B cell (primary cell): ENCODE measurements at regions of chr2 and their contacts with region 1.

Region 1: DNA sequence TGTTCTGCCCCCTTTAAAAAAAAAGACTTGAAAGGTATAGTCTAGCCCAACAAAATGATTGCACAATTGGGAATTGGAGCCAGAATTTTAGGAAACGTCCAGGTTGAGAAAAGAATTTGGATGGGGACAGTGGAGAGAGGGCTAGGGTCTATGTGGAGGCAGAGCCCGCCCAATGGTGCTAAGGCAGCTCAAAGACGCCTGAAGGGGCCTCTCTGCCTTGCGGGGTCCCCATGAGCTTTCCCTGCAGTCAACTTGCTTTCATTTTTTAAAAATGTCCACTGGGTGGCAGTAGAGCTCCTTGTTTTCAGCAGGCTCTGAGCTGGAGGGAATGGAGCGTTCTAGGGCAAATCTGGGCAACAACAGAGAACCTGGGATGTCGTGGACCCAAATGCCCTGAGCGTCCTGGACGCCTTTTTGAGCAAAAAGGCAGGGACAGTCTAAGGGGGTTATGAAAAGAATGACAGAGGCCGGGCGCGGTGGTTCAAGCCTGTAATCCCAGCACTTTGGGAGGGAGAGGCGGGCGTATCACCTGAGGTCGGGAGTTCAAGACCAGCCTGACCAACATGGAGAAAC is 40.2 kb upstream of the ITM2C start:
- DNase-seq: peak; percentile 86
- ATAC-seq: peak; percentile 75
- H3K4me3 ChIP-seq: no peak overlapping the region
- H3K4me3 Mint-ChIP-seq: peak overlapping the region; percentile 37
- H3K27ac ChIP-seq: no peak overlapping the region
- H3K27ac Mint-ChIP-seq: no peak overlapping the region
- H3K4me1 ChIP-seq: peaks cover 14 to 16% of the 10 kb centered on the region in 2 donors
- H3K4me1 Mint-ChIP-seq: peaks cover 5% of the 10 kb centered on the region
- H3K27me3 ChIP-seq: peaks cover 0 to 33% (median 20%) of the 10 kb centered on the region in 4 experiments
- H3K27me3 Mint-ChIP-seq: peaks cover 29% of the 10 kb centered on the region
- CTCF ChIP-seq: peak; percentile 83

Region 2: GRCh38 chr2:230840301-230840700 is 15.8 kb after region 1 on chr2:
- CTCF ChIA-PET with region 1: interaction called, 16 read pairs
- POLR2A ChIA-PET with region 1: no interaction called
- intact Hi-C with region 1: no loop called
- DNase-seq: no peak
- ATAC-seq: no peak
- H3K4me3 ChIP-seq: no peak overlapping the region
- H3K4me3 Mint-ChIP-seq: no peak overlapping the region
- H3K27ac ChIP-seq: no peak overlapping the region
- H3K27ac Mint-ChIP-seq: no peak overlapping the region
- H3K4me1 ChIP-seq: no peaks in the 10 kb centered on the region
- H3K4me1 Mint-ChIP-seq: no peaks in the 10 kb centered on the region
- H3K27me3 ChIP-seq: peaks cover 0 to 2% (median 0%) of the 10 kb centered on the region in 4 experiments
- H3K27me3 Mint-ChIP-seq: peaks cover 21% of the 10 kb centered on the region
- CTCF ChIP-seq: no peak

Region 3: GRCh38 chr2:230847883-230848388 is 23.4 kb after region 1 on chr2:
- CTCF ChIA-PET with region 1: interaction called, 30 read pairs
- POLR2A ChIA-PET with region 1: no interaction called
- intact Hi-C with region 1: loop called (anchors 1 kb)
- DNase-seq: peak; percentile 88
- ATAC-seq: peak; percentile 91
- H3K4me3 ChIP-seq: peak overlapping the region in 1 of 5 experiments; percentile 8
- H3K4me3 Mint-ChIP-seq: no peak overlapping the region
- H3K27ac ChIP-seq: no peak overlapping the region
- H3K27ac Mint-ChIP-seq: no peak overlapping the region
- H3K4me1 ChIP-seq: peaks cover 5 to 7% of the 10 kb centered on the region in 2 donors
- H3K4me1 Mint-ChIP-seq: peaks cover 6% of the 10 kb centered on the region
- H3K27me3 ChIP-seq: peaks cover 0 to 2% (median 0%) of the 10 kb centered on the region in 4 experiments
- H3K27me3 Mint-ChIP-seq: peaks cover 37% of the 10 kb centered on the region
- CTCF ChIP-seq: peak; percentile 95

Region 4: GRCh38 chr2:230913406-230914143 is 89.1 kb after region 1 on chr2:
- CTCF ChIA-PET with region 1: interaction called, 40 read pairs
- POLR2A ChIA-PET with region 1: no interaction called
- intact Hi-C with region 1: loop called (anchors 1 kb)
- DNase-seq: peak; percentile 82
- ATAC-seq: peak; percentile 87
- H3K4me3 ChIP-seq: no peak overlapping the region
- H3K4me3 Mint-ChIP-seq: no peak overlapping the region
- H3K27ac ChIP-seq: no peak overlapping the region
- H3K27ac Mint-ChIP-seq: no peak overlapping the region
- H3K4me1 ChIP-seq: peaks cover 0 to 10% of the 10 kb centered on the region in 2 donors
- H3K4me1 Mint-ChIP-seq: peaks cover 16% of the 10 kb centered on the region
- H3K27me3 ChIP-seq: no peaks in the 10 kb centered on the region
- H3K27me3 Mint-ChIP-seq: no peaks in the 10 kb centered on the region
- CTCF ChIP-seq: peak; percentile 80

Region 5: GRCh38 chr2:230981704-230982103 is 157.2 kb after region 1 on chr2:
- CTCF ChIA-PET with region 1: interaction called, 200 read pairs
- POLR2A ChIA-PET with region 1: no interaction called
- intact Hi-C with region 1: no loop called
- DNase-seq: no peak
- ATAC-seq: no peak
- H3K4me3 ChIP-seq: no peak overlapping the region
- H3K4me3 Mint-ChIP-seq: no peak overlapping the region
- H3K27ac ChIP-seq: no peak overlapping the region
- H3K27ac Mint-ChIP-seq: peak overlapping the region; percentile 50
- H3K4me1 ChIP-seq: peaks cover 1 to 2% of the 10 kb centered on the region in 2 donors
- H3K4me1 Mint-ChIP-seq: peaks cover 8% of the 10 kb centered on the region
- H3K27me3 ChIP-seq: peaks cover 0 to 3% (median 0%) of the 10 kb centered on the region in 4 experiments
- H3K27me3 Mint-ChIP-seq: peaks cover 13% of the 10 kb centered on the region
- CTCF ChIP-seq: no peak

Region 6: DNA sequence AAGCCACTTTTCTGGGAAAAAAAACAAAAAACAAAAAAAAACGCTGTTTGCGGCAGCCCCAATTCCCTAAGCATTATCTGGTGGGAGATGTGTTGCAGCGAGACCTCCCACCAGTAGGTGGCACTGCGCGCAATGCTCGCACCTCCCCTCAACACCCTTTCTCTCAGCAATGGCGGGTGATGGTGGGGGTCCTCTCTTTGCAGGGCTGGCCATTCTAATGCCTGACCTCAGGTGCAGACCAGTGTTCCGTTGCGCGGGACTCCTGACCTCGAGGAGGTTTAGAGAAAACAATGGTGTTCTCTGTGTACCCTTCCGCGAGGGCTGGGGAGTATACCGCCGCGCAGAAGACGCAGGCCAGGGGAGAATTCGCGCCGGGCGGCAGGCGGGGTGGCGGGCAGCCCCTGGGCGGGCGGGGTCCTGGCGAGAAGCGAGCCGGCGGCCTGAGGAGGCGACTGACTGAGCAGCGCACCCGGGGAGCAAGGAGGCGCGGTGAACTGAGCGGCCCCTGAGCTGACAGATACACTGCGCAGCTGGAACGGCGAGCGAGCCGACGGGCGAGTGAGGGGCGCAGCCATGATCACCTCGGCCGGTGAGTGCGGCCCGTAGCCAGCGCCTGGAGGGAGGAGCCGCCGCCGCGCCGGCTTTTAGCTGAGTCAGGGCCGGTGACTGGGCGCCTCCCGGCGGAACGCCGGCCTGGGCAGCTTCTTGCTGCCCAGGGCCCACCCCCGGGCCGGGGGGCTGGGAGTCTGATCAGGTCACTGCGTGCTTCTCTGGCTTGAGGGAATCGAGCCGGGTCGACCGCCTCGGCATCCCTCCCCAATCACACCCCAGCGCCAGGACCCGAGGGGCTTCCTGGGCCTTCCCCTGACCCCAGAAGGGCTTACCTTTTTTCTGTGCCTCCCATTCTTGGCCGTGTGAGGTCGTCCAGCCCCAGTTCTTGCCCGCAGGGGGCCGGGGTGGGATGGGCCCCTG is 232.2 kb after region 1 on chr2 and contains the start of gene PSMD1:
- CTCF ChIA-PET with region 1: interaction called, 17 read pairs
- POLR2A ChIA-PET with region 1: interaction called, 4 read pairs
- intact Hi-C with region 1: loop called (anchors 1 kb)
- DNase-seq: peak; percentile 98
- ATAC-seq: peak; percentile 87
- H3K4me3 ChIP-seq: peak within 1 kb of the TSS; percentile 75 to 99 (median 90)
- H3K4me3 Mint-ChIP-seq: peak within 1 kb of the TSS; percentile 100
- H3K27ac ChIP-seq: peak within 1 kb of the TSS; percentile 85 to 86
- H3K27ac Mint-ChIP-seq: peak within 1 kb of the TSS; percentile 100
- H3K4me1 ChIP-seq: peaks cover 22 to 27% of the 10 kb centered on the region in 2 donors
- H3K4me1 Mint-ChIP-seq: peaks cover 39% of the 10 kb centered on the region
- H3K27me3 ChIP-seq: peaks cover 0 to 6% (median 0%) of the 10 kb centered on the region in 4 experiments
- H3K27me3 Mint-ChIP-seq: peaks cover 16% of the 10 kb centered on the region
- CTCF ChIP-seq: peak; percentile 91
- total RNA-seq, gene PSMD1: 45.4 and 48.2 TPM in 2 replicates